ENCODE measurements at regions of chr4 and their contacts with region 1.

Region 1: DNA sequence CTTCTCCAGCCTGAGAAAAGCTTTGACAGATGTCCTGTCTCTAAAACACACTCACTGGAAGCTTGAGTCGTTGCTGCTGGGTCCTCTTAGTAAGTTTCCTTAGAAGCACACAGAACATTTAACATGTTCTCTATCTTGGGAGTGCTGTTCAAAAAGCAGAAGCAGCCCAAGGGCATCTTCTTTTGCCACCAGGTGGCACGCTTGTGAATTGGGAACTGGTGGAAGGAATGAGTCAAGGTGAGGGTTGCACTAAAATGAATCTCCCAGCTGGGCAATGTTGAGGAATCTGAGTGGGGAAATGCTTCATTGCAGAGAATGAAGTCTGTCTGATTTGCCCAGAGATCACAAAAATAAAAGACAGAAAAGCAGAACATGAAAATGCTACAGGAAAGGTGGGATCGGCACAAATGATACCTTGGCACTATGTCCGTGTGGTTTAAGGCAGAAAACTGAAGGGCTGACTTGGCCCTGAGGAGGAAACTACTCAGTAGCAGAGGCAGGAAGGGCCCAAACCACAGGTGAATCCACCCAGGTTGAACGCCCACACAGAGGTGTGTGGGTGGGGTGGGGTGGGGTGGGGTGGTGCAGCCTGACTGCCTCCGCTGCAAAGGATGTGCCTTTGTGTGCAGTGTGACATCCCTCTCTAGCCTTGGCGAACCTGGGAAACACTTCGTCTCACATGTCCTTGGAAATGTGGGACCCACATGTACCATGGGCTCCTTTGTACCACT is 26.0 kb downstream of the KIT start:
- DNase-seq: peak; percentile 28
- CTCF ChIP-seq: peak; percentile 55

Region 2: DNA sequence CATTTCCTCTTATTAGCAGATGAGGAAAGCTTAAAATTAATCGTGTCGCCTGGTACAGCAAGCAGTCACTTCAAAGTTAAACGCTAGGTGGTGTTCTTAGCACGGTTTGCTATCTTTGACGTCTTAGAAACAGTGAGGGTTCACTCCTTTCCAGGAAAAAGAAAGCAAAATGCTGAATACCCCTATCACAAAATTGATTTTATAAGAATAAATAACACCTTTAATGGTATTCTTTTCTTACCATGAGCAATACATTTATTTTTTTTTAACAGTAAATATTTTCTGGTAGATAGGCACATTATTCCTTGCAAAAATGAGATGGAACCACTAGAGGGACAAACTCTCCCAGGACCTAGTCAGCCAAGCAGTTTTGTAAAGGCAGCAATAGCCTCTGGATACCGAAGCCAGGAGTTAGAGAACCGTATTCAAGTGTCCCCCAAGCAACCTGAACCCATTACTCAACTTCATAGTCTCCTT is 287.7 kb after region 1 on chr4:
- in situ Hi-C with region 1: loop called (anchors 25 kb)
- DNase-seq: peak; percentile 33
- CTCF ChIP-seq: peak; percentile 55

Region 3: DNA sequence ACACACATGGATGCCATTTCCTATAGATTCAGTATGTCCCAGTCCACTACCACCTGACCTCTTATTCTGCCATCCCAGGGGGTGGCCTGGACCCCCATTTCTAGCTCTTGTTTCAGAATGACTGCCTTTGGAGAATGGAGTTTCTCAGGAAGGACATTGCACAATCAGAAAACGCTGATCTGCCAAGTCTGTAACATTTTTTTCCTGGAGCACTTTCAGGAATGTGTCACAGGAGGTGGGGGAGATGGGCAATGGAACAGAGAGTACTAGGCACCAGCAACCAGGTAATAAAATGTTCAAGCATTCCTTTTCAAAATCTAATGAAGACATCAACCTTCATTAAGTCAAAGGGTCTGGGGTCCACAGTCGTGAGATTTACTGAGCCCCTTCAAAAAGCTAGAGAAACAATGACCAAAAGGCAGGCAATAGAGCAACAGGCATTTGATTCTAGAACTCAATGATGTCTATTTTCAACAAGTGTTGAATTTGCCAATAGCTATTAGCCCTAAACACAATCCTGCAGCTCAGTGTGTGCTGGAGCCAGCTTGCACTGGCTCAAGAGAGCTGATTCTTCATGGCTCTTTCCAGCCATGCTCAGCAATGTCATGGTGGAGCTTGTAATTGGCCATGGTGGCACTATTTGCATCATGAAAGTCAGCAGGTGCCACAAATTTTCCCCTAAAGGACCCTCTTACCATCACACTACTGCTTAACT is 354.6 kb after region 1 on chr4:
- in situ Hi-C with region 1: no loop called
- DNase-seq: no peak
- CTCF ChIP-seq: no peak